ENCODE measurements at regions of chr3 and their contacts with region 1.

Region 1: GRCh38 chr3:51379301-51379700 is 5.8 kb upstream of the MANF start:
- DNase-seq: no peak
- ATAC-seq: no peak
- H3K4me3 Mint-ChIP-seq: no peak overlapping the region
- H3K27ac Mint-ChIP-seq: no peak overlapping the region
- H3K4me1 Mint-ChIP-seq: peaks cover 13% of the 10 kb centered on the region
- H3K27me3 Mint-ChIP-seq: no peaks in the 10 kb centered on the region
- CTCF ChIP-seq: no peak

Region 2: GRCh38 chr3:51391075-51391567 is 11.8 kb after region 1 on chr3 and contains the start of gene RBM15B:
- CTCF ChIA-PET with region 1: interaction called, 15 read pairs
- POLR2A ChIA-PET with region 1: interaction called, 4 read pairs
- DNase-seq: peak; percentile 98
- ATAC-seq: peak; percentile 86
- H3K4me3 Mint-ChIP-seq: peak within 1 kb of the TSS; percentile 76
- H3K27ac Mint-ChIP-seq: peak within 1 kb of the TSS; percentile 86
- H3K4me1 Mint-ChIP-seq: peaks cover 54% of the 10 kb centered on the region
- H3K27me3 Mint-ChIP-seq: no peaks in the 10 kb centered on the region
- CTCF ChIP-seq: no peak; the same call in 1 of the 2 replicates
- total RNA-seq, gene RBM15B: 53.9 to 55.6 TPM (median 55.4 TPM) in 3 replicates

Region 3: GRCh38 chr3:51434746-51435327 is 55.5 kb after region 1 on chr3:
- CTCF ChIA-PET with region 1: no interaction called
- POLR2A ChIA-PET with region 1: no interaction called
- DNase-seq: peak; percentile 30
- ATAC-seq: peak; percentile 95
- H3K4me3 Mint-ChIP-seq: no peak overlapping the region
- H3K27ac Mint-ChIP-seq: no peak overlapping the region
- H3K4me1 Mint-ChIP-seq: no peaks in the 10 kb centered on the region
- H3K27me3 Mint-ChIP-seq: no peaks in the 10 kb centered on the region
- CTCF ChIP-seq: peak; percentile 49; the same call in 1 of the 2 replicates

Measured in WTC11 (cell line).